ENCODE measurements at regions of chr10 and their contacts with region 1.

Region 1: DNA sequence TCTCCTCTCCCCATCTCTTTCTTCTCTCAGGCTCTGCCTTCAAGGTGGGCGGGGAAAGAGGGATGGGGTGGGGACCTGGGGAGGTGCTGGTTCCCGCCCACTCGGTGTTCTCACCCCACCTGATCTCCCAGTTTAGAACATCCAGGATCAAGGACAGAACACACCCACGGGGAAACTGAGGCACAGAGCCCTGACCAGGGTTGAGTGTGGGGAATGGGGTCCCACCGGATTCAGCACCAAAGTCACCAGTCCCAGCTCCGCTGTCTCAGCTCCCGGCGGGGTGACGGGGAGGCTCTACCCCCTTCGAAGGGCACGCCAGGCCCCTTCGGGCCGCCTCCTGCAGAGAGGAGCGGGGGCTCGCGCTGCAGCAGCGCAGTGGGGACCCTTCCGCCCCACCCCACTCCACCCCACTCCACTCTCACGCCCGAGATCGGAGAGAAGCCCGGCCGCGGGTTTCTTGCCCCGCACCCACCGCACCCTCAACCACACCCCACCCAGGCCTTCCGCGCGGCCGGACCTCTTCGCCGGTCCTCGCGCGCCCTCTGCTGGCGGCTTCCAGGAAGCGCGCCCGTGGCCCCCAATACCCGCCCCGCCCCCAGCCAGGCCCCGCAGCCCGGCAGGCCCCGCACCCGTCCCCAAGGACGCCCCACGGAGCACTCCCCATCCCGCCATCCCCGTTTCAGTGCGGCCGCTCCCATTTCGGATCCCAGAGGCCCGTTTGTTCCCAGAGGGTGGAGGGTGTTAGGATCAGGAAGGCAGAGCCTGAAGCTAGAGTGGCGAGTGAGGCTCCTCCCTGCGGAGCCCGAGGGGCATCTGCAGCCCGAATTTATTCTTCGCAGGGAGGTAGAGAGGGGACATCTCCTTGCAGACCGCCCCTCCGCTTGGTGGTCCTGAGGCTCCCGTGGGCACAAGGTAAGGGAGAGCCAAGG is 18.0 kb downstream of the POLL start:
- DNase-seq: peak; percentile 44 to 95 (median 84)

Region 2: GRCh38 chr10:101214446-101215396 is 355.4 kb before region 1 on chr10:
- intact Hi-C with region 1: loop called (anchors 5 kb)
- DNase-seq: peak; percentile 15 to 86 (median 71)